ENCODE measurements at regions of chr1 and their contacts with region 1.

Region 1: DNA sequence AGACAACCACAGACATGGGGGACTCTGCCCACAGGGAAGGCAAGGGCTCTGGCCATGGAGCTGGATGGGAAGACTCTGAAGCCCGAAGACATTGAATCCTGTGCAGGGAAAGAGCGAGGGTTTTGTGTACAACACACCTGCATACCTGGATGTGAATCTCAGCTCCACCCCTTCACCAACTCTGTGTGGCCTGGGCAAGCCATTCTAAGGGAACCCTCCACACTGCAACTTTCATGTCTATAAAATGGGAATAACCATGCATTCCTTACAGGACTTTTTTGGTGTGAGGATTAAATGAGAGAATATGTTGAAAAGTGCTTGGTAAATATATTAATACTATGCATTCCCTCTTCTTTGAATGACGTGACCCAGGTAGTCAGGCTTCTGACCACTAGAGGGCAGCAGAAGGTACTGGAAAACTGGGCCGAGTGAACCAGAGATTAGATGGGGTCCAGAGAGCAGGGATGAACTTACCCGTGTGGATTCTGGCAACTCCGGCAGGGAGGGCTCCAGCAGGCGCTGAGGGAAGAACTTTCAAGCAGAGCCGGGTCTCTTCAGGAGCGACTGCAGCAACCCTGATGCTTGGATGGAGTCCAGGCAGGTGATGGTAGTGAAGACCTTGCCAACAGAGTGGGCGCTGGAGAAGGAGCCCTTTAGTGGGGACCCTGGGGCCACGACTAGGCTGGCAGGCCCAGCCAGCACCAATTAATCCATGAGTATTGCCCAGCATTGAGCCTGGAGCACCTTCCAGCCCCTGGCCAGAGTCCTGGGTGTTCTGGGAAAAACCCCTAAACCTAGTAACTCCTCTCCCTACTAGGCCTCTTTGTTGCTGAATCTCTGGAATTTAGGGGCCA is 834 bp upstream of the ELF3 start:
- DNase-seq: peak; percentile 26 to 80
- ATAC-seq: peak; percentile 46 to 83 (median 74)
- H3K4me3 ChIP-seq: no peak overlapping the region
- H3K27ac ChIP-seq: peak overlapping the region in 4 of 10 donors; percentile 18 to 72 (median 36)
- H3K4me1 ChIP-seq: peaks cover 0 to 18% (median 5%) of the 10 kb centered on the region in 9 donors
- H3K27me3 ChIP-seq: no peaks in the 10 kb centered on the region
- CTCF ChIP-seq: peak; percentile 70 to 91 (median 86)

Region 2: DNA sequence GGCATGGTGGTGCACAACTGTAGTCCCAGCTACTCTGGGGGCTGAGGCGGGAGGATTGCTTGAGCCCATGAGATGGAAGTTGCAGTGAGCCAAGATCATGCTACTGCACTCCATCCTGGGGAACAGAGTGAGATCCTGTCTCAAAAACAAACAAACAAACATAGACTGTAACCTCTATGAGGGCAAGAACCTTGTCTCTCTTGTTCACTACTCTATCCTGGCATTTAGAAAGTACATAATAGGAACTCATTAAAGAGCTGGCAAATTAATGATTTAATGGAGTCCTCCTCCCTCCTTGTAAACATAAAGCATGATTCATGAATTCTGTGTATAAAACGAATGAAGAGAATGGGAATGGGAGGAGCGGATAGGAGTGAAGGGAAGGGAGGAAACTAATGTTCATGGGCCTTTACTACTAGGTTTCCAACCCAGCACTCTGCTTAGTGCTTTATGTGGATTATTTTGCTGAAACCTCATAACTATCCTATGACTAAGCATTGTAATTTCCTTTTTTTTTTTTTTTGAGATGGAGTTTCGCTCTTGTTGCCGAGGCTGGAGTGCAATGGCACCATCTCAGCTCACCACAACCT is 71.8 kb before region 1 on chr1:
- intact Hi-C with region 1: no loop called
- DNase-seq: no peak
- ATAC-seq: no peak
- H3K4me3 ChIP-seq: no peak overlapping the region
- H3K27ac ChIP-seq: peak overlapping the region in 3 of 10 donors; percentile 42 to 53 (median 50)
- H3K4me1 ChIP-seq: peaks cover 0 to 33% (median 6%) of the 10 kb centered on the region in 9 donors
- H3K27me3 ChIP-seq: no peaks in the 10 kb centered on the region
- CTCF ChIP-seq: no peak

Region 3: GRCh38 chr1:201955009-201955728 is 54.4 kb before region 1 on chr1 and contains the start of gene TIMM17A:
- intact Hi-C with region 1: no loop called
- DNase-seq: peak; percentile 94 to 97
- ATAC-seq: peak; percentile 99 to 100 (median 100)
- H3K4me3 ChIP-seq: peak within 1 kb of the TSS; percentile 66 to 94 (median 82)
- H3K27ac ChIP-seq: peak within 1 kb of the TSS; percentile 30 to 91 (median 84)
- H3K4me1 ChIP-seq: peaks cover 3 to 27% (median 16%) of the 10 kb centered on the region in 9 donors
- H3K27me3 ChIP-seq: no peaks in the 10 kb centered on the region
- CTCF ChIP-seq: peak in 2 of 9 donors; percentile 7 to 14
- total RNA-seq, gene TIMM17A: 71.1 to 113 (median 88.9) TPM

Region 4: DNA sequence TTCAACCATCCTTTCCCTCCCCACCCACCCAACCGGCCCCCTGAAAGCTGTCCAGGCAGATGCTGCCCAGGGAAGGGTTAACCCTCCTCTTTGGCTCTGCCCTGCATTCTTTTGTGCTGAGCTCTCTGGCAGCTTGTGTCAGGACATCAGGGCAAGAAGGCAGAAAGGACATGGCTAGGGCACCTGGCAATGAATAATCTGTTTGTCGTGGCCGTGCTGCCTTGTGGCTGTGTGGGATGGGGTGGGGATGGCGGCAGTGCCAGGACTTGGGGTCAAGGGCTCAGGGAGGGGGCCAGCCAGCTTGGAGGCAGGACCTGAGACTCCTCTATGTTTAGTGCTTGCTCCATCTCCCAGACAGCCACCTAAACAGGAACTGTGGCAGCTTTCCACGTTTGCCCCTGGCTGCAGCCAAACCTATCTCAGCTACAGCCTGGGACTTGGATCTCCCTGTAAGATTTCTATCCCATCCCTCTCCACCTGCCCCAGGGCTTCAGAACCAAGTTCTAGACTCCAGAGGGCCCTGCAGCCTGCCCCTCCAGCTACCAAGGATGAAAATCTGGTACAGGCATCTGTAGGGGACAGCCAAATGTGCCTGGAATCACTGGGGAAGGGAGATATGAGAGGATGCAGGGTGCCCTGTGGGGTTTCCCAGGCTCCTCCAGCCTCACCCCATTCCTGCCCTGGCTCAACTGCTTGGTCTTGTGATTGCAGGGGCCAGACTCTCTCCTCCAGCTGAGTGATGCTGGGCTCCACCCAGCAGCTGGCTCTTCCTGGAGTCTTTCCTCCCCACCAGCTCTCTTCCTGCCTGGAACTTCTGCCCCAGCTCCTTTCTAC is 103.5 kb after region 1 on chr1:
- intact Hi-C with region 1: loop called in 7 of 10 experiments (anchors 1 to 5 kb)
- DNase-seq: peak; percentile 61 to 68
- ATAC-seq: peak; percentile 62 to 80 (median 77)
- H3K4me3 ChIP-seq: no peak overlapping the region
- H3K27ac ChIP-seq: peak overlapping the region; percentile 39 to 85 (median 70)
- H3K4me1 ChIP-seq: peaks cover 0 to 33% (median 19%) of the 10 kb centered on the region in 9 donors
- H3K27me3 ChIP-seq: no peaks in the 10 kb centered on the region
- CTCF ChIP-seq: no peak

Region 5: DNA sequence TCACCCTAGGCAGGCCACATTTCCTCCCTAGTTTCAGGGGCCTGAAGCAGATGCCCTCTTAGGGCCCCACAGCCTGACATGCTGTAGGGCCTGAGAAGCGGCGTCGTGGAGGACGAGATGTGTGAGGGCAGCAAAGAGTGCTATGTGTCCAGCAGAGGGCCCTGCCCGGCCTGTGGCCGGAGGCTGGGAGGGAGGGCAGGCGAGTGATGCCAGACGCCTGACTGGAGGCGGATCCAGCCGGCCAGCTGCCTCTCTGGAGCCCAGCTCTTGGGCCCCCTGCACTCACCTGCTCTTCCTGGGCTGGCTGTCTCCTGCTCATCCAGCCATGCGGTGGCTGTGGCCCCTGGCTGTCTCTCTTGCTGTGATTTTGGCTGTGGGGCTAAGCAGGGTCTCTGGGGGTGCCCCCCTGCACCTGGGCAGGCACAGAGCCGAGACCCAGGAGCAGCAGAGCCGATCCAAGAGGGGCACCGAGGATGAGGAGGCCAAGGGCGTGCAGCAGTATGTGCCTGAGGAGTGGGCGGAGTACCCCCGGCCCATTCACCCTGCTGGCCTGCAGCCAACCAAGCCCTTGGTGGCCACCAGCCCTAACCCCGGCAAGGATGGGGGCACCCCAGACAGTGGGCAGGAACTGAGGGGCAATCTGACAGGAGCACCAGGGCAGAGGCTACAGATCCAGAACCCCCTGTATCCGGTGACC is 113.2 kb after region 1 on chr1 and contains the start of gene GPR37L1:
- intact Hi-C with region 1: loop called in 9 of 10 experiments (anchors 1 to 5 kb)
- DNase-seq: peak in 1 of 2 donors; percentile 55
- ATAC-seq: peak; percentile 13 to 69 (median 60)
- H3K4me3 ChIP-seq: no peak within 1 kb of the TSS
- H3K27ac ChIP-seq: no peak within 1 kb of the TSS
- H3K4me1 ChIP-seq: peaks cover 0 to 9% (median 0%) of the 10 kb centered on the region in 9 donors
- H3K27me3 ChIP-seq: peaks cover 0 to 3% (median 0%) of the 10 kb centered on the region in 7 donors
- CTCF ChIP-seq: peak in 7 of 9 donors; percentile 37 to 59 (median 46)
- total RNA-seq, gene GPR37L1: 0.04 to 0.20 (median 0.06) TPM in 4 of 10 donors, not detected in the others

Region 6: GRCh38 chr1:202135221-202135721 is 125.7 kb after region 1 on chr1:
- intact Hi-C with region 1: loop called in 5 of 10 experiments (anchors 1 to 5 kb)
- DNase-seq: peak; percentile 31 to 36
- ATAC-seq: peak; percentile 15 to 74 (median 62)
- H3K4me3 ChIP-seq: no peak overlapping the region
- H3K27ac ChIP-seq: peak overlapping the region in 1 of 10 donors; percentile 12
- H3K4me1 ChIP-seq: peaks cover 4 to 37% (median 19%) of the 10 kb centered on the region in 9 donors
- H3K27me3 ChIP-seq: no peaks in the 10 kb centered on the region
- CTCF ChIP-seq: peak; percentile 79 to 92 (median 89)